Heart left ventricle (tissue), 16 donors: ENCODE measurements at regions of chr2 and their contacts with region 1.

Region 1: GRCh38 chr2:204691911-204692510 is 146.7 kb downstream of the PARD3B start:
- DNase-seq: peak in 3 of 5 donors; percentile 26 to 45 (median 36)
- ATAC-seq: peak; percentile 71 to 91 (median 82)
- H3K4me3 ChIP-seq: no peak overlapping the region
- H3K27ac ChIP-seq: peak overlapping the region in 1 of 12 donors; percentile 20
- H3K4me1 ChIP-seq: peaks cover 0 to 20% (median 0%) of the 10 kb centered on the region in 12 donors
- H3K27me3 ChIP-seq: no peaks in the 10 kb centered on the region
- CTCF ChIP-seq: peak; percentile 55 to 81 (median 74)
- POLR2A ChIP-seq: no peak

Region 2: DNA sequence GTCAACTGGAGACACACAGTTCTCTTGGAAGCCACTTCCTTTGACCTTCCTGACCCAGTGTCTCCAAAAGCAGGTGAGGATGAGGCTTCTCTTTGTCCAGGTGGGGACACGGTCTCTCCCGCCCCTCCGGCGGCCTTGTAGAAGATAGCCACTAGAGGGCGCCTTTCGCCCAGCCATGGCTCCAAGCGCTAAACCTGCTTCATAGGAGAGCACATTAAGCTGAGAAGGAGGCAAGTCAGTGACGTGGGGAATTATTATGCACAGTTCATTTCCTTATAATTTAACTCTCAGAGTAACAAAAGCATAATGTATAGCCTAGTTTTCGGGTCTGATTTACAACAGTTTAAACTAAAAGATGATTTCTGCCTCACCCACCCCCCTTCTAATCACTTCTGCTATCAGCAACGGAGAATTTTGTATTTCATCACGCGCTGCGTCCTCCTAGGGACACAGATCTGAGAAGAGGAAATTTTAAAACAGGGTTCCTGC is 546.7 kb before region 1 on chr2:
- intact Hi-C with region 1: loop called in 3 of 10 experiments (anchors 5 to 10 kb)
- DNase-seq: peak; percentile 72 to 82 (median 75)
- ATAC-seq: peak; percentile 84 to 99 (median 95)
- H3K4me3 ChIP-seq: peak overlapping the region in 11 of 12 donors; percentile 25 to 61 (median 47)
- H3K27ac ChIP-seq: peak overlapping the region in 9 of 12 donors; percentile 3 to 67 (median 46)
- H3K4me1 ChIP-seq: peaks cover 0 to 15% (median 1%) of the 10 kb centered on the region in 12 donors
- H3K27me3 ChIP-seq: peaks cover 0 to 4% (median 0%) of the 10 kb centered on the region in 9 donors
- CTCF ChIP-seq: peak; percentile 89 to 99 (median 96)
- POLR2A ChIP-seq: no peak

Region 3: DNA sequence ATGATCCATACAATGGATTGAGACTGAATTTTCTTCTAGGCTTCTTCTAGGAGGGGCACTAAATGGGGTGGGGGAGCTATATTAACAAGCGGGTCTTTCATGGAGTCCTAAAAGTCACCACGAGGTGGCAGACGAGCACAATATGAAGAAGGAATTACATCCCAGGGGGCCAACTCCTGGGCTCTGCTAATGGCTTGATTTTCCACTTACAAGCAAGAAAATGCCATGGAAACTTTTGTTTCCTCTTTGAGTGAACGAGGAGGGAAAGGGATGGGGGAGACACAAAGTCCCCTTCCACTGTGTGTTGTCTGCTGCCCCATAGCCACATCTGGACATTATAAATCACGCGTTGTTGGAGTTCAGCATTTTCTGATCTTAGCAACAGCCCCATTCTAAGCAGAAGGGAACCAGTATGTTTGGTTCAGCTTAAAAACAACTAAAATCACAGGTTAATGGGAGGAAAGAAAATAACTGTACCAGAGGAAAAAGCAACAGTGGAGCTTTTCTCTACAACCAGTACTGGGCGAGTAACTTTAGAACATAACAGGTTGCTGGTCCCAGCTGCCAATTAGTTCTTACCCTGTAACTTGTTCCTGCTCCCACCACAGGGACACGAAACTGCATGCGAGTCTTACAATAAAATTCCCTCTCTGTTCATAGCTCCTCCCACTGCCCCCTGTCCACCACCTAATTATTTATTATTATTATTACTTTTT is 431.7 kb before region 1 on chr2:
- intact Hi-C with region 1: loop called in 8 of 10 experiments (anchors 2 to 10 kb)
- DNase-seq: peak in 4 of 5 donors; percentile 50 to 70 (median 56)
- ATAC-seq: peak; percentile 65 to 82 (median 73)
- H3K4me3 ChIP-seq: peak overlapping the region in 1 of 12 donors; percentile 4
- H3K27ac ChIP-seq: peak overlapping the region in 1 of 12 donors; percentile 11
- H3K4me1 ChIP-seq: peaks cover 0 to 18% (median 9%) of the 10 kb centered on the region in 12 donors
- H3K27me3 ChIP-seq: peaks cover 0 to 3% (median 0%) of the 10 kb centered on the region in 9 donors
- CTCF ChIP-seq: peak; percentile 61 to 84 (median 78)
- POLR2A ChIP-seq: no peak

Region 4: GRCh38 chr2:204483608-204484081 is 208.4 kb before region 1 on chr2:
- intact Hi-C with region 1: no loop called
- DNase-seq: no peak
- ATAC-seq: no peak
- H3K4me3 ChIP-seq: no peak overlapping the region
- H3K27ac ChIP-seq: no peak overlapping the region
- H3K4me1 ChIP-seq: peaks cover 0 to 3% (median 0%) of the 10 kb centered on the region in 12 donors
- H3K27me3 ChIP-seq: no peaks in the 10 kb centered on the region
- CTCF ChIP-seq: no peak
- POLR2A ChIP-seq: no peak